RWPE1 (cell line): ENCODE measurements at regions of chr10 and their contacts with region 1.

Region 1: GRCh38 chr10:67770537-67770936 is 67.5 kb downstream of the DNAJC12 start:
- DNase-seq: no peak
- H3K27ac ChIP-seq: no peak overlapping the region
- CTCF ChIP-seq: no peak

Region 2: DNA sequence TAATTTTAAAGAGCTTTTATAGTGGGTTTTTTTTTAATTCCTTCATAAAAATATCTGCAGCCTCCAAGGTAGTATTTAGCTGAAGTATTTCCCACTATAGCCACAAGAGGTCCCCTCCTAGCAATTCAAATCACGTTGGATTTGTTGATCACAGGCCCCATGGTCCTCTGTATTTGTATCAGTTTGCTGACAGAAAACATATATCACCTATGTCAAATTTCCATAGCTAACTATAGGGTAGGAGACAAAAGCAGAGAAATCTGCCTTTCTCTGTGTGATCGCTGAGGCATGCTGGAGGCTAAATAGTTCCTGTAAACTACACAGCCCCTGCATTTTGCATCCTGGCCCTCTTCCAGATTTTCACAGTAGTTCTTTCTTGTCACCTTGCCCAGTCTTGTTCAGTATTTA is 72.8 kb before region 1 on chr10:
- CTCF ChIA-PET with region 1: interaction called, 14 read pairs
- POLR2A ChIA-PET with region 1: no interaction called
- DNase-seq: peak; percentile 59
- H3K27ac ChIP-seq: no peak overlapping the region
- CTCF ChIP-seq: peak; percentile 64